Heart left ventricle (tissue), 16 donors: ENCODE measurements at regions of chr18 and their contacts with region 1.

Region 1: DNA sequence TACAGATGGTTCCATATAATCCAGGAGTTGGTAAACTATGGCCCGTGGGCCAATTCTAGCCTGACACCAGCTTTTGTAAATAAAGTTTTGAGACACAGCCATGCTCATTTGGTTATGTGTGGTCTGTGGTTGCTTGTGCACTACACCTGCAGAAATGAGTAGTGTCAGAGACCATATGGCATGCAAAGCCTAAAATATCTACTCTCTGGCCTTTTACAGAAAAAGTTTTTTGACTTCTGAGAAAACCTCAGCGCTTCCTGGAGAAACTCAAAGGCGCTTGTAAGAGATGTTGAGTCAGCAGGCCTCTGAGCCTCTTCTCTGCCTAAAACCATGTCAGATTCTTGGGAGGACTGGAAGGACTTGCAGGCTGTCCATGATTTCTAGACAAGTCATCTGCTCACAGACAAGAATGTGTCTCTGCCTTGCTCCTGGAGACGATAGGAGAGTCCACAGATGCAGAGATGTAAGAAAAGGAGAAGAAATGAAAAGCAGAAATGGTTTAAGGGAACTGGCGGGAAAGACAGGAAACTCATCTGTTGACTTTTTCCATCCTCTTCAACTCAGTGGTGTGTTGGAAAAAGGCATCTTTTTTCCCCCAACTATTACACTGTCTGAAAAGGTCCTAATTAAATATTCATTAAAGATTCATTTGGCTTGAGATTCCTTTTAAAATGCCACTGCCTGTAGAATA is 5.2 kb downstream of the TTC39C start:
- DNase-seq: no peak
- ATAC-seq: no peak
- H3K4me3 ChIP-seq: no peak overlapping the region
- H3K27ac ChIP-seq: peak overlapping the region in 1 of 12 donors; percentile 54
- H3K4me1 ChIP-seq: peaks cover 0 to 85% (median 6%) of the 10 kb centered on the region in 12 donors
- H3K27me3 ChIP-seq: no peaks in the 10 kb centered on the region
- CTCF ChIP-seq: no peak
- POLR2A ChIP-seq: no peak

Region 2: DNA sequence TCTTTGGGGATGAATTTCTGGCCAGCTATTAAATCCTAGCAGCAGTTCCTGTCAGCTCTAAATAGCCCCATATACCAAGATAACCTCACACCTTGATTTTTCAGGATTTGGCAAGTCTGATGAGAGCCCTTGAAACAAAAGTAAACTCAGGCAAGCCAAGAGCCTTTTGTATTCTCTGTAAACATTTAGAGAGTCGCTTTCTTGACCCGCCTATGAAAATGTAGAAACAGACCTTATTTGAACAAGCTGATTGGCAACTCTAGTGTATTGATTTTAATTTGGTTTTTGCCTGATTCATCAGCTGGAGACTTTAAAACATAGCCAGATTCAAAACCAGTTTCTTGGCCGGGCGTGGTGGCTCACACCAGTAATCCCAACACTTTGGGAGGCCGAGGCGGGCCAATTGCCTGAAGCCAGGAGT is 841.1 kb before region 1 on chr18:
- intact Hi-C with region 1: no loop called
- DNase-seq: no peak
- ATAC-seq: no peak
- H3K4me3 ChIP-seq: no peak overlapping the region
- H3K27ac ChIP-seq: no peak overlapping the region
- H3K4me1 ChIP-seq: peaks cover 0 to 24% (median 3%) of the 10 kb centered on the region in 12 donors
- H3K27me3 ChIP-seq: no peaks in the 10 kb centered on the region
- CTCF ChIP-seq: no peak
- POLR2A ChIP-seq: no peak

Region 3: DNA sequence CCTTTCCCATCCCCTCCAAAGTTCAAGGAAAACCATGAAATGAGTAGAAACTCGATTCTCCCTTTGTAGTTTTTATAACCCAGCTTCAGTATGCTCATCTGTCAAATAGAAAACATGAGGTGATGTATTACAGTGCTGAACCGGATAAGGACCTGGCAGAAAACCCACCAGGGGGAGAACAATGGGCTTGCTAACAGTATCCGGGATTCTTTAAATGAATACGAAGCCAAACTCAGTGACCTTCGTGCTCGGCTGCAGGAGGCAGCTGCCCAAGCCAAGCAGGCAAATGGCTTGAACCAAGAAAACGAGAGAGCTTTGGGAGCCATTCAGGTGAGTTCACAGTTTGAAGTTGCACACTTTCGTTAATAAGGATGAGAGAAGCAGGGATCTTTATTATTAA is 118.8 kb before region 1 on chr18:
- intact Hi-C with region 1: no loop called
- DNase-seq: peak in 1 of 5 donors; percentile 24
- ATAC-seq: peak in 3 of 4 donors; percentile 31 to 55 (median 38)
- H3K4me3 ChIP-seq: no peak overlapping the region
- H3K27ac ChIP-seq: no peak overlapping the region
- H3K4me1 ChIP-seq: peaks cover 0 to 8% (median 0%) of the 10 kb centered on the region in 12 donors
- H3K27me3 ChIP-seq: no peaks in the 10 kb centered on the region
- CTCF ChIP-seq: no peak
- POLR2A ChIP-seq: no peak

Region 4: DNA sequence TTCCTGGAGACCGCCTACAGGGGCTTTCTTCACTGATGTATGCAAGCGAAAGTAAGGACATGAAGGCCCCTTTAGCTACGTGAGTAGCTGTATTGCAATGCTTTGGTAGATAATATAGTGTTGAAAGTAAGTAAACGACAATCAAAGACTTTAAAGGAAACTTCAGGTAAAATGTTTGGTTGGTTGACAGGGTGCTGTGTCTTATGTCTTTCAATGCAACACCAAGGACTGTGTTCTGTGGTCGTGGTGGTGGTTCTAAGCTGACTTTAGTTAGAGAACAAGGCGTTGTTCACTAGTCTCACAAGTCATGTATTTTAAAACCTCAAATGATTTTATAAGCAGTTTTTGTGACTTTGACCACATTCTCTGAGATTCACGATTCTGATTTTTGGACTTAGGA is 61.1 kb after region 1 on chr18:
- intact Hi-C with region 1: loop called in 3 of 10 experiments (anchors 5 to 10 kb)
- DNase-seq: no peak
- ATAC-seq: no peak
- H3K4me3 ChIP-seq: no peak overlapping the region
- H3K27ac ChIP-seq: no peak overlapping the region
- H3K4me1 ChIP-seq: peaks cover 0 to 25% (median 12%) of the 10 kb centered on the region in 12 donors
- H3K27me3 ChIP-seq: no peaks in the 10 kb centered on the region
- CTCF ChIP-seq: no peak
- POLR2A ChIP-seq: no peak